ENCODE measurements at regions of chr15 and their contacts with region 1.

Region 1: GRCh38 chr15:91706322-91707032 is 147.0 kb upstream of the SLCO3A1 start:
- DNase-seq: peak; percentile 63
- ATAC-seq: peak; percentile 72
- H3K4me3 ChIP-seq: no peak overlapping the region
- H3K27ac ChIP-seq: no peak overlapping the region
- H3K4me1 ChIP-seq: no peaks in the 10 kb centered on the region
- H3K27me3 ChIP-seq: no peaks in the 10 kb centered on the region
- CTCF ChIP-seq: peak; percentile 71
- POLR2A ChIP-seq: no peak
- RAD21 ChIP-seq: peak; percentile 62

Region 2: DNA sequence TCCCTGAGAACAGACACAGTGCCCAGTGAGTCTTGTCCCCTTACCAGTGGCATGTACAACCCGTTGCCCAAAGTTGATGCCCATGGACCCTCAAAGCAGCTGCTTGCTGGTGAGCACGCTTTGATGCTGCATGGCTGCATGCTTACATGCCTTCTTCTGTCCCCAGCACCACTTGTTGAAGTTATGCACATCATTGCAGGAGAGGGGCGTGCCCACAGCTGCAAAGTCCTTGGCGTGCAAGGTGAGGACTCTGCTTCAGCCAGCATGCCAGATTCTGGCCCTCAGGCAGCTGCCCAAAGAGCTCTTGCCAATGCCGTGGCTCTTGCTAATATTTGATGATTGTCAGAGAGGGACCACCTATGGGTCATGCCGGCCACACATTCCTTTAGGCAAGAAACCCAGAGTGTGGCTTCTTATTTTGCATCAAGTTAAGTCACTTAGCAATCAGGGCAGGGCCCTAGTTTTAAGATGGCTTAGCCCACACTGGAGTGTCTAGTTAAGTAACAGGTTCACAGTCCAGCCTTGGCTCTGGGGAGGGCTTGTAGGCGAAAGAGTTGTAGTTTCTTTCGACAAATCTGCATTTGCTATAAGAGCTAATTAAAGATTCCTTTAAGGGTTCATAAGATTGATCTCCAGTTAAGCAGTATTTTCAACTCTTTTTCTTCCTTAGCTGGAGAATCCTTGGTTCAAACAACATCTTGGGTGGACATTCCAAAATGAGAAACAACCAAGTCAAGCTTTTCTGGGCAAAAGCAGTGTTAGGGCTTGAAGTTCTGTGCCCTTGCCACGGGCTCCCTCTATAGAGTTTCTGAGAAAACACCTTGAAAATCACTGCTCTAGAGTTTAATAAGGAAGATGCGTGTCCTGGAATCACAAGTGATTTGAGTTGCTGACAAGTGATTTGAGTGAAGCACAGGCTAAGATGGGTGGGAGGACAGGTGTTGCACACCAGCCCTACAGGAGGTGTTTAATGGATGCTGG is 275.6 kb after region 1 on chr15:
- CTCF ChIA-PET with region 1: no interaction called
- POLR2A ChIA-PET with region 1: no interaction called
- dilution Hi-C with region 1: no loop called
- in situ Hi-C with region 1: no loop called
- intact Hi-C with region 1: loop called (anchors 1 kb)
- DNase-seq: peak; percentile 5
- ATAC-seq: no peak
- H3K4me3 ChIP-seq: no peak overlapping the region
- H3K27ac ChIP-seq: no peak overlapping the region
- H3K4me1 ChIP-seq: no peaks in the 10 kb centered on the region
- H3K27me3 ChIP-seq: no peaks in the 10 kb centered on the region
- CTCF ChIP-seq: peak; percentile 32; the same call in 1 of the 2 replicates
- POLR2A ChIP-seq: no peak
- RAD21 ChIP-seq: peak; percentile 38

Measured in IMR-90 (cell line).